Prostate gland (tissue), 2 donors: ENCODE measurements at regions of chr14 and their contacts with region 1.

Region 1: DNA sequence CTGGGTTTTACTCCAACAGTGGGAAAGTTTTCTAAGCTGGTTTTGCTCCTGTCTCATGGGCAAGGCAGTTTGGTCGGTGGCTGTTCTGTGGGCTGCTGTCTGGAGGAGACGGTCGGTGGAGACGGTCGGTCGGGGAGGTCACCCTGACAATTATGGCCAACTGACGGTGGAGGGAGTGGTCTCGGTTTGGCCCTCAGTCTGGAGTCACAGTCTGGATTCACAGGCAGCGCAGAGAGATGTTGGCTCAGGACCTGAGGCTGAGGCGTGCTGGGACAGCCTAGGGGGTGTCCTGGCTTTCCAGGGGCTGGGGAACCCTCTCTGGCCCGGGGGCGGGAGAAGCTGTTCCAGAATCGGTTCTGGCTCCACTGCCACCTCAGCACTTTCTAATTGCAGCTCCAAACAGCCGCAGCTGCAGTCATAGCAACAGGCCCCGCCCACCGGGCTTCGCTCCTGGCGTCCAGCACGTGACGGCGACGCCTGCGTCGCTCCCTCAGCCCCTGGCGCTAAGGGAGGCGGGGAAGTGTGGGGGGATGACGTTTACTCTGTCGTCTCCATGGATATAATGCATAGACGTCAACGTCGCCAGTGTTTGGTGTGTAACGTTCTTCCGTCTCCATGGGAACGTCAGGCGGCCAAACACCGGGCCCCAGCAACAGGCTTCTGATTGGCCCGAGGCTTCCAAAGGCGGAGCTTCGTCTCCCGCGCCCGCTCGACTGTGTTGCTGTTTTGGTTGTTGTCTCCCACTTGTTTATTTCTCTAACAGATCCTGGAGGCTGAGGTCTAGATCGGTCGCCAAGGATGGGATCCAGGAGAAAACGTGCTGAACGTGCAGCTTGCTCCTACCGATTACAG is 19.8 kb upstream of the FOS start:
- DNase-seq: peak; percentile 98
- H3K4me3 ChIP-seq: peak overlapping the region; percentile 18 to 29
- H3K27ac ChIP-seq: peak overlapping the region; percentile 93 to 97
- H3K4me1 ChIP-seq: peaks cover 26% of the 10 kb centered on the region
- H3K27me3 ChIP-seq: no peaks in the 10 kb centered on the region
- CTCF ChIP-seq: peak in 1 of 4 experiments; percentile 11
- POLR2A ChIP-seq: peak; percentile 88

Region 2: GRCh38 chr14:74595006-74595735 is 663.7 kb before region 1 on chr14:
- intact Hi-C with region 1: no loop called
- DNase-seq: no peak
- H3K4me3 ChIP-seq: no peak overlapping the region
- H3K27ac ChIP-seq: peak overlapping the region in 1 of 2 donors; percentile 48
- H3K4me1 ChIP-seq: peaks cover 8% of the 10 kb centered on the region
- H3K27me3 ChIP-seq: no peaks in the 10 kb centered on the region
- CTCF ChIP-seq: no peak
- POLR2A ChIP-seq: no peak

Region 3: GRCh38 chr14:75278422-75279161 is 19.8 kb after region 1 on chr14 and contains the start of gene FOS:
- intact Hi-C with region 1: loop called (anchors 2 kb)
- DNase-seq: peak; percentile 92
- H3K4me3 ChIP-seq: peak within 1 kb of the TSS; percentile 44 to 59
- H3K27ac ChIP-seq: peak within 1 kb of the TSS; percentile 96 to 98
- H3K4me1 ChIP-seq: peaks cover 4% of the 10 kb centered on the region
- H3K27me3 ChIP-seq: no peaks in the 10 kb centered on the region
- CTCF ChIP-seq: peak in 2 of 4 experiments; percentile 38 to 50
- POLR2A ChIP-seq: peak; percentile 98
- total RNA-seq, gene FOS: 73.9 to 127 TPM